Psoas muscle (tissue), 8 donors: ENCODE measurements at regions of chr17 and their contacts with region 1.

Region 1: DNA sequence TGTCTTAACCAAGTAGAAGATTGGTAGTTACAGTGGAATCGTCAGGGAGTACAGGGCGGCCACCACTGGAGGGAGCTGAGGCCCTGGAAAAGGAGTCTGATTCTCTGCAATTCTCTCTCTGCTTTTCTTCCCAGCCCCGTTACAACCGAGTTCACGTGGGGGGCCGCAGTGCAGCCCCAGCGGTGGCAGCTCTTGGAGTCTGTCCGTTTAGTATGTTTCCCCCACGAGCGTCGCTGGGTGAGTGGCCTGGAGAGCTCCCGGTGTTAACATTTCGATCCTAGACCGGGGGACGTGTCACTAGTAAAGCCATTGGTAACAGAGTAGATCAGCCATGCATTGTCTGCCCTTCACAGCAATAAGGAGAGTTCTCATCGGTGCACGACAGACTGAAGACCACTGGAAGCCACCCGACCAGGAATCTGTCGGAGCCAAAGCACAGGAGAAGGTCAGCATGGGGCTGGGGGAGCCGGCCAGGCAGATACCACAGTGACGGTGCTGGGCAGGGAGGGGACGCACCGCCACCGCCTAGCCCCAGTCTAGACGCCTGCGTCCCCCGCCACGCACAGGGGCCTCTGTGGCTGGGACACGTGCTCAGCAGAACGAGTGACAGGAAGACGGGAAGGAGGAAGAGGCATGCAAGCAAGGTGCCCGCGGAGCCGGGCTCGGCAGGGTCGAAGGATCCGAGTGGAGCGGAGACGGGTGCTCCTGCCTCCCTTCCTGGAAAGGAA is 15.7 kb downstream of the SLC16A3 start:
- DNase-seq: peak; percentile 40 to 59
- ATAC-seq: no peak
- H3K4me3 ChIP-seq: no peak overlapping the region
- H3K27ac ChIP-seq: peak overlapping the region; percentile 87
- H3K4me1 ChIP-seq: peaks cover 66% of the 10 kb centered on the region
- H3K27me3 ChIP-seq: no peaks in the 10 kb centered on the region
- CTCF ChIP-seq: peak; percentile 38

Region 2: DNA sequence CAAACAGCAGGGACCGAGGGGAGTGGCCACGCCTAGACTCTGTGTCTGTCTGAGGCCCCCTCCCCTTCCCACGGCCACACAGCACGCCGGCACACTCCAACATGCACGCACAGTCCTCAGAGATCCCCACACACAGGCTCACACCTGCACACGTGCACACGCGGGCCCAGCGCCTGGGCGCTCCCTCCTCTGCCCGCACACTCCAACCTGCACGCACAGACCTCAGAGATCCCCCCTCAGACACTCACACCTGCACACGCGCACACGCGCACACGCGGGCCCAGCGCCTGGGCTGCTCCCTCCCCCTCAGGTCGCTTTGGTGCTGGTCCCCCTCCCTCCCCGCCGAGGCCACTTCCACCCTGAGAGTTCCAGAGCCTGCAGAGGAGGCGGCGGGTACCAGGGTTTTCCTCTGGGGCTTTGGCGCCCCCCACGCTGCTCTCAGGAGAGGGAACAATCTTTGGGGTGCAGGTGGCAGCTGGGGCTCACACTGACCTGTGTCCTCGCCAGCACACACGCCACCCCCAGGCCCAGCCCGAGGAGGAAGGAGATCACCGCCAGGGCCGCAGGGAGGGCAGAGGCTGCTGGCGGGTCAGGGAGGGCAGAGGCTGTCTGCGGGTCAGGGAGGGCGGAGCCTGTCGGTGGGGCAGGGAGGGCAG is 71.3 kb after region 1 on chr17:
- intact Hi-C with region 1: loop called in 1 of 2 experiments (anchors 5 kb)
- DNase-seq: no peak
- ATAC-seq: peak in 2 of 4 donors; percentile 20 to 35
- H3K4me3 ChIP-seq: peak overlapping the region; percentile 4
- H3K27ac ChIP-seq: no peak overlapping the region
- H3K4me1 ChIP-seq: no peaks in the 10 kb centered on the region
- H3K27me3 ChIP-seq: peaks cover 0 to 21% (median 11%) of the 10 kb centered on the region in 3 donors
- CTCF ChIP-seq: no peak